ENCODE measurements at regions of chr7 and their contacts with region 1.

Region 1: GRCh38 chr7:100705753-100706671 is at the start of gene POP7:
- DNase-seq: peak; percentile 99
- H3K4me3 Mint-ChIP-seq: peak within 1 kb of the TSS; percentile 96
- H3K27ac Mint-ChIP-seq: peak within 1 kb of the TSS; percentile 89
- H3K4me1 Mint-ChIP-seq: peaks cover 15% of the 10 kb centered on the region
- H3K27me3 Mint-ChIP-seq: peaks cover 4% of the 10 kb centered on the region
- total RNA-seq, gene POP7: 23.2 to 29.6 TPM

Region 2: GRCh38 chr7:100478966-100479665 is 226.9 kb before region 1 on chr7 and contains the start of gene TSC22D4:
- CTCF ChIA-PET with region 1: interaction called, 3 read pairs
- intact Hi-C with region 1: loop called (anchors 5 kb)
- DNase-seq: peak; percentile 93
- H3K4me3 Mint-ChIP-seq: peak within 1 kb of the TSS; percentile 98
- H3K27ac Mint-ChIP-seq: peak within 1 kb of the TSS; percentile 92
- H3K4me1 Mint-ChIP-seq: peaks cover 42% of the 10 kb centered on the region
- H3K27me3 Mint-ChIP-seq: no peaks in the 10 kb centered on the region
- total RNA-seq, gene TSC22D4: 46.0 to 48.7 TPM

Region 3: DNA sequence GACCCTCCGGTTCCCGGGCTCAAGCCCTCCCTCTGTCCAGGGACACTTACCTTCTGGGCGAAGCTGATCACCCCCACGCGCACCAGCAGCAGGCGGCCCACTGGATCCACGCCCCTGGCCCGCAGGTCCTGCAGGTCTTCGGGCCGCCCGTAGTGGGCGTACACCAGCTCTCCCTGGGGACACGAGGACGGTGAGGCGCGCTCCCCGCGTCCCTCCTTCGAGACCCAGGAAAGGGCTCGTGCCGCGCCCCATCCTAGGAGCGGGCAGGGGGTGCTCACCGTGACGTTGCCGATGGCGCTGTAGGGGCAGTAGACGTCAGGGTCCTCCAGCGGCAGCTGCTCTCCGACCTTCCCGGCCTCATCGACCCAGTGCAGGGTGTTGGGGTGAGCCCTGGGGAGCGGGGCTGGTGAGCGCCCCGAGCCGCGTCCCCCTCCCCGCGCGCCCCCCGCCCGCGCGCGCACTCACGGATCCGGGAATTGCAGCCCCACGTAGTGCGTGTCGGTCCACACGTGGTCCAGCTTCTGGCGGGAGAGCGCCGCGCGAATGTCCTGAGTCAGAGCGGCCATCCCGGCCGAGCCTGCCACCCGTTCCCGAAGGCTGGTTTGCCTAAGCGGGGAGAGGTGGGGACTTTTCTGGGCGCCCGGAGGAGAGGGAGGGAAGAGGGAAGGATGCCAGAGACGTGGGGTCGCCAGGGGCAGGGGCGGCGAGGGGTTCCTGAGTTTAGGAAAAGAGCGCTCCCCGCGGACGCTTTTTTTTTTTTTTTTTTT is 72.9 kb before region 1 on chr7:
- CTCF ChIA-PET with region 1: interaction called, 18 read pairs
- intact Hi-C with region 1: no loop called
- DNase-seq: peak; percentile 71
- H3K4me3 Mint-ChIP-seq: peak overlapping the region; percentile 80
- H3K27ac Mint-ChIP-seq: peak overlapping the region; percentile 76
- H3K4me1 Mint-ChIP-seq: peaks cover 22% of the 10 kb centered on the region
- H3K27me3 Mint-ChIP-seq: no peaks in the 10 kb centered on the region

Region 4: DNA sequence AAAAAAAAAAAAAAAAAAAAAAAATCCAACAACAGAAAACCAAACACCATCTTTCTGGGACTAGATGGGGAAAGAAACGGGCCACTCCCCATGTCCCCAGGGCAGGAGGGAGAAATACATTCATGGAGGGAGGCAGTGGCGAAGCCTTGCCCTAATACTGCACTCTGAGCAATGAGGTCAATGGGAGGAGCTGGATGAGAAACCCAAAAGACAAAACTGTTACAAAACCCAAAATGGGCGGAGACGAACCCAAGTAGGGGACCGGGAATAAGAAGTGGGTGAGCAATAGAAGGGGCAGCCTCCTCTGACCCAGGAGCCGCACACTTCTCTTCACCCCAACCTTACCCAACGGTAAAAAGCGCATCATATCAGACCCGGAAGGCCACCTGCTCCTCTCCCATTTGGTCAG is 25.8 kb before region 1 on chr7:
- CTCF ChIA-PET with region 1: interaction called, 10 read pairs
- intact Hi-C with region 1: no loop called
- DNase-seq: no peak
- H3K4me3 Mint-ChIP-seq: no peak overlapping the region
- H3K27ac Mint-ChIP-seq: peak overlapping the region; percentile 50
- H3K4me1 Mint-ChIP-seq: peaks cover 25% of the 10 kb centered on the region
- H3K27me3 Mint-ChIP-seq: no peaks in the 10 kb centered on the region

Region 5: DNA sequence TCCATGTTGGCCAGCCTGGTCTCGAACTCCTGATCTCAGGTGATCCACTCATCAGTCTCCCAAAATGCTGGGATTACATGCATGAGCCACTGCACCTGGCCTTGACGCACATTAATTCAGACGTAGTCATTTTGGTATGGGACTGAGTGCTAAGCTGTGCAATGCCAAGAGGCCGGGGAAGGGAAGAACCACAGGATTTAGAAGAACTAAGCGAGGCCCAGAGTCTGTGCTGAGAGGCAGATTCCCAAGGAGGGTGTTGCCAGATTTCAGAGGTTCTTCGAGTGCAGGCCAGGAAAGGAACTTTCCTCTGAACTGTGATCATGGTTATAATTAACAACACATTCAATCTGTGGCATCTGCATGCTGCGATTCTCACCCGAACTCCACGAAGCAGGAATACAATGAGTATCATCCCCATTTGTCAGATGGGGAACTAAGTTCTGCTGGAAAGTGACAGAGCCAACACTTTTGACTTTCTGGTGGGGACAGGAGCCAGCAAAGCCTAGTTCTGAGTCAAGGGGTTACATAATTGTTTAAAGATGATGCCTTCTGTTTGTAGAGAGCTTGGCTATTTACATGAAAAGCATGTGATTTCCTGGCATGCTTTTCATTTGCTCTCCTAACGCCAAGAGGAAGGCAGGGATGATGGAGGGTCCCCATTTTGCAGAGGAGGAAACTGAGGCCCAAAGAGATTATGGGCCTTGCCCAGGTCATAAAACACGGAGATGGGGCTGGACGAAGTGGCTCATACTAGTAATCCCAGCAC is 21.2 kb after region 1 on chr7:
- CTCF ChIA-PET with region 1: interaction called, 52 read pairs
- intact Hi-C with region 1: loop called (anchors 1 kb)
- DNase-seq: no peak
- H3K4me3 Mint-ChIP-seq: no peak overlapping the region
- H3K27ac Mint-ChIP-seq: no peak overlapping the region
- H3K4me1 Mint-ChIP-seq: peaks cover 3% of the 10 kb centered on the region
- H3K27me3 Mint-ChIP-seq: peaks cover 14% of the 10 kb centered on the region

Region 6: DNA sequence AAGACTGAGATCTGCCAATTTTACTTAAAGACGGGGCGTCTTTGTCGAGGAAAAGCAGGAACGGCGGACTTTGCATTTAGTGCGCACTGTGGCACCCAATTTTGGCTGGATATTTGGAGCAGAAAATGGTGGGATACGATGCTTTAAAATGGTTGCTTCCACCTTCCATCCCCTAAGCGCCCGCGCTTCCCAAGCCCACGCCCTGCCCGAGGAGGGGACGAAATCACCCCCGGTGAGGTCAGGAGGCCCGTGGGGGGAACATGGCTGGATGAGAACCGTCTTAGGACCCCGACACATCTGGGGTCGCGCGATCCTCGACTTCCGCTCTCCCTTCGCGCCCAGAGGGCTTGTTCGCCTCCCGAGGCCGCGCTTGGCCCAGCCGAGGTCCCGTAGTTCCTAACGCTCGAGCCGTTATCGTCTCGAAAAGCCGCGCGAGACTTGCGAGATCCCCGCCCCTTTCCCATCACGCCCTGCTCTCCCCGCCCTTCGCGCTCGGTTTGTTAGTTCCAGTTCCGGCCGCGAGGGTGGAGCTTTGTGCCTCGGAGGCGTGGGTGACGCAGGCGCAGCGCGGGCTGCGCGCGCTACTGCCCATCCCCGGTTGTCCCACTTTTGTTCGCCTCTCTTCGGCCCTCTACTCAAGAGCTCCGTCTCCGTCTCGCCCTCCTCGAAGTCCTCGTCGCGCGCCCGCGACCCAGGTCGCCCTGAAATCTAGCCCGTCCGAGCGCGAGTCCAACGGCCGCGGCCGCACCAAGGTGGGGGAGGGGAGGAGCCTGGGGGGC is 168.8 kb after region 1 on chr7 and contains the start of gene SRRT:
- CTCF ChIA-PET with region 1: interaction called, 3 read pairs
- intact Hi-C with region 1: loop called (anchors 1 kb)
- DNase-seq: peak; percentile 99
- H3K4me3 Mint-ChIP-seq: peak within 1 kb of the TSS; percentile 97
- H3K27ac Mint-ChIP-seq: peak within 1 kb of the TSS; percentile 98
- H3K4me1 Mint-ChIP-seq: peaks cover 44% of the 10 kb centered on the region
- H3K27me3 Mint-ChIP-seq: no peaks in the 10 kb centered on the region
- total RNA-seq, gene SRRT: 166 to 169 TPM